PC-9 (cell line): ENCODE measurements at regions of chr12 and their contacts with region 1.

Region 1: GRCh38 chr12:49130151-49131050 is 794 bp downstream of the TUBA1B start:
- DNase-seq: peak; percentile 83 to 89
- H3K4me3 ChIP-seq: peak overlapping the region; percentile 84
- H3K27ac ChIP-seq: peak overlapping the region; percentile 94
- H3K4me1 ChIP-seq: peaks cover 26% of the 10 kb centered on the region
- H3K27me3 ChIP-seq: no peaks in the 10 kb centered on the region
- CTCF ChIP-seq: peak; percentile 82

Region 2: DNA sequence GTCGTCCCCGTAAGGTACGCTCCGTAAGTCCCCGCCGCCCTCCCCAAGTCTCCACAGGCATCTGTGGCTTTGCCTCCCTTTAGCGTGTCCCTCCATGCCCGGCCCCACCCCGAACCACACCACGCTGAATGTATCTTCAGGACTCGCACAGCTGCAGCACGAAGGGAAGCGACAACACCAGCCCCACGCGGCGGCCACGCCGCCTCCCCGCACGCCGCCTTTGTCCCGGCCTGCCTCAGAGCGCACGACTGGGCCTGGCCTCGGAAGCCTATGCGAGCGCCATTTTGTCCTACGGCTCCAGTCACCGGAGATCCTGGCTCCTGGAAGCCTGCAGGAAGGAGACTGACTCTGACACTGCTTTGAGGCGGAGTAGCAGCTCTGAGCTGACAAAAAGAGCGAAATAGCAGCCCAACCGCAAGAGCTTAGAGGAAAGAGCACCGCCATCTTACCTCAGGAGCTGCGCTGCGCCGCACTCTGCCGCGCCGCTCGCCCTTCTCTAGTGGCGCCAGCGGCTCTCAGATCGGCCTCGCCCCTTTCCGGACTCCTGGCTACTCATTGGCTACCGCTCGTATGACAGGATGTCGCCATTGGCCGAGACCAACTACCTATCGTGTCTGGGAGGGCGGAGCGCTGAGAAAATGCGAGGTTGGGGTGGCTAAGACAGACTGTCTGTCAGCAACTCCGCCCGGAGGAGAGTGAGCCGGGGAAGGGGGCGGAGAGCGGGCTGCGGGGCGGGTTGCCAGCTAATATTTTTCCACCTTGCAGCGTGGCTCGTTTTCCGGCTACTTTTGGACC is 448.5 kb before region 1 on chr12 and contains the start of gene KANSL2:
- CTCF ChIA-PET with region 1: no interaction called
- POLR2A ChIA-PET with region 1: no interaction called
- intact Hi-C with region 1: no loop called
- DNase-seq: peak; percentile 97
- H3K4me3 ChIP-seq: peak within 1 kb of the TSS; percentile 77
- H3K27ac ChIP-seq: peak within 1 kb of the TSS; percentile 50; the same call in 1 of the 2 replicates
- H3K4me1 ChIP-seq: peaks cover 30% of the 10 kb centered on the region
- H3K27me3 ChIP-seq: no peaks in the 10 kb centered on the region
- CTCF ChIP-seq: no peak
- total RNA-seq, gene KANSL2: 21.8 and 28.2 TPM in 2 replicates

Region 3: GRCh38 chr12:49188914-49189367 is 58.5 kb after region 1 on chr12 and contains the start of gene TUBA1A:
- CTCF ChIA-PET with region 1: no interaction called
- POLR2A ChIA-PET with region 1: interaction called, 16 read pairs
- intact Hi-C with region 1: no loop called
- DNase-seq: peak; percentile 66 to 71
- H3K4me3 ChIP-seq: peak within 1 kb of the TSS; percentile 94
- H3K27ac ChIP-seq: no peak within 1 kb of the TSS
- H3K4me1 ChIP-seq: no peaks in the 10 kb centered on the region; the same call in 1 of the 2 replicates
- H3K27me3 ChIP-seq: peaks cover 6% of the 10 kb centered on the region; the same call in 1 of the 2 replicates
- CTCF ChIP-seq: no peak
- total RNA-seq, gene TUBA1A: 14.1 and 14.2 TPM in 2 replicates

Region 4: DNA sequence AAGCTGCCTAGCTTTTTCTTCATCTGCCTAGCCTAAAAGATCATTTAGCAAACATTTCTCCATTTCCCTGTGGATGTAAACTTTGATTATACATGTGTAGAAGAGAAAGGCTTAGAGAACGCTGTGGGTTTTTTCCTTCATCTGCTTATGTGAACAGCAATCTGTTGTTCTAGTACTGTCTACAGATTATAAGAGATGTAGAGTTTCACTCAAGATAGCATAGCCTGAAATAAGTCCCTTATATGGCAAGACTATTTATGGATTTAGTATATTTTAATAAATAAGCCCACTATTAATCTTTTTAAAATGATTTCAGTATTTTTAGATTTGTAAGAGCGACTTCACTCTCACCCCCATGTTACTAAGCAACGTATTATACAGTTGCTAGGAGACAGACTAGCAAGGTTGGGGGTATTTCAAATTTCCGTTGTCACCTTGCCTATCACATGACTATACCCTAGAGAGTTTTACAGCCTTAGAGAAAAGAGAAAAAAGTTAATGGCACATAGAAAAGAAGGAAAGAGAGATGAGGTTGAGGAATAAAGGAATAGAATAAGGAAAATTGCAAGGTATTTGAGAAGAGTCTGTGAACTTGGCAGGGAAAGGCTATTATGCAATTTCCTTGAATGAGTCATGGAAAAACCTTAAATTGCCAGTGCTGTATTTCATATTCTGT is 70.7 kb after region 1 on chr12:
- CTCF ChIA-PET with region 1: interaction called, 20 read pairs
- POLR2A ChIA-PET with region 1: interaction called, 10 read pairs
- intact Hi-C with region 1: loop called (anchors 5 kb)
- DNase-seq: peak; percentile 7 to 78
- H3K4me3 ChIP-seq: no peak overlapping the region; the same call in 1 of the 2 replicates
- H3K27ac ChIP-seq: peak overlapping the region; percentile 88
- H3K4me1 ChIP-seq: peaks cover 29% of the 10 kb centered on the region
- H3K27me3 ChIP-seq: no peaks in the 10 kb centered on the region
- CTCF ChIP-seq: no peak

Region 5: GRCh38 chr12:49232940-49233841 is 102.8 kb after region 1 on chr12:
- CTCF ChIA-PET with region 1: interaction called, 10 read pairs
- POLR2A ChIA-PET with region 1: interaction called, 4 read pairs
- intact Hi-C with region 1: loop called (anchors 1 kb)
- DNase-seq: no peak
- H3K4me3 ChIP-seq: no peak overlapping the region
- H3K27ac ChIP-seq: no peak overlapping the region
- H3K4me1 ChIP-seq: 0 out of 2 replicates have a peak, but pooled peaks cover 3% of the 10 kb centered on the region
- H3K27me3 ChIP-seq: no peaks in the 10 kb centered on the region
- CTCF ChIP-seq: no peak